Activated naive CD4-positive, alpha-beta T cell treated with anti-CD3 and anti-CD28 coated beads, Interleukin-2, amount 10 ng/mL, durations not matched to agents 7 days and 5 days (primary cell): ENCODE measurements at regions of chr14 and their contacts with region 1.

Region 1: GRCh38 chr14:77549436-77549835 is 50.8 kb upstream of the ISM2 start:
- DNase-seq: no peak
- H3K4me3 Mint-ChIP-seq: no peak overlapping the region
- H3K27ac Mint-ChIP-seq: no peak overlapping the region
- H3K4me1 Mint-ChIP-seq: peaks cover 4% of the 10 kb centered on the region
- H3K27me3 Mint-ChIP-seq: no peaks in the 10 kb centered on the region

Region 2: DNA sequence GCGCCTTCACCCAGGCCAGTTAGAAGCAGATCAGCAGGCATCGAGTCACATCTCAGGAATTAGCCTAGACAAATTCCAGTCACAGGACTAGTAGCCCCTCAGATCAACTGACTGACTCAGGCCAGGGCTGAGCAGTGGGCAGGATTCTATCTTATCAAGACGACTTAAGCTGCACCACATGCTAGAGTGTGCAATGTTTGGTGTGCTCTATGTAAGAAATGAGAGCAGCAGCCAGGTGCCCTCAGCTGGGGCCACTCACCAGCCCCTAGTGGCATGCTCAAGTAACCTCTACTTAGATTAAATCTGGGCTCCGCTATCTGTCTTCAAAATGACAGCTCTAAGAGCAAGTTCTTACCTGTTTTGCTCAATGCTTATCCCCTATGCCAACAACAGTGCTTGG is 258.7 kb before region 1 on chr14:
- CTCF ChIA-PET with region 1: no interaction called
- DNase-seq: no peak
- H3K4me3 Mint-ChIP-seq: no peak overlapping the region
- H3K27ac Mint-ChIP-seq: no peak overlapping the region
- H3K4me1 Mint-ChIP-seq: no peaks in the 10 kb centered on the region
- H3K27me3 Mint-ChIP-seq: no peaks in the 10 kb centered on the region

Region 3: GRCh38 chr14:77457522-77458290 is 91.7 kb before region 1 on chr14 and contains the starts of genes AHSA1 and VIPAS39:
- CTCF ChIA-PET with region 1: interaction called, 33 read pairs
- DNase-seq: peak; percentile 97
- H3K4me3 Mint-ChIP-seq: peak within 1 kb of the TSS; percentile 99
- H3K27ac Mint-ChIP-seq: peak within 1 kb of the TSS; percentile 98
- H3K4me1 Mint-ChIP-seq: peaks cover 31% of the 10 kb centered on the region
- H3K27me3 Mint-ChIP-seq: no peaks in the 10 kb centered on the region

Region 4: GRCh38 chr14:77495334-77495733 is 54.1 kb before region 1 on chr14:
- CTCF ChIA-PET with region 1: no interaction called
- DNase-seq: no peak
- H3K4me3 Mint-ChIP-seq: no peak overlapping the region
- H3K27ac Mint-ChIP-seq: no peak overlapping the region
- H3K4me1 Mint-ChIP-seq: peaks cover 7% of the 10 kb centered on the region
- H3K27me3 Mint-ChIP-seq: peaks cover 58% of the 10 kb centered on the region